HEK293 (cell line): ENCODE measurements at regions of chr11 and their contacts with region 1.

Region 1: DNA sequence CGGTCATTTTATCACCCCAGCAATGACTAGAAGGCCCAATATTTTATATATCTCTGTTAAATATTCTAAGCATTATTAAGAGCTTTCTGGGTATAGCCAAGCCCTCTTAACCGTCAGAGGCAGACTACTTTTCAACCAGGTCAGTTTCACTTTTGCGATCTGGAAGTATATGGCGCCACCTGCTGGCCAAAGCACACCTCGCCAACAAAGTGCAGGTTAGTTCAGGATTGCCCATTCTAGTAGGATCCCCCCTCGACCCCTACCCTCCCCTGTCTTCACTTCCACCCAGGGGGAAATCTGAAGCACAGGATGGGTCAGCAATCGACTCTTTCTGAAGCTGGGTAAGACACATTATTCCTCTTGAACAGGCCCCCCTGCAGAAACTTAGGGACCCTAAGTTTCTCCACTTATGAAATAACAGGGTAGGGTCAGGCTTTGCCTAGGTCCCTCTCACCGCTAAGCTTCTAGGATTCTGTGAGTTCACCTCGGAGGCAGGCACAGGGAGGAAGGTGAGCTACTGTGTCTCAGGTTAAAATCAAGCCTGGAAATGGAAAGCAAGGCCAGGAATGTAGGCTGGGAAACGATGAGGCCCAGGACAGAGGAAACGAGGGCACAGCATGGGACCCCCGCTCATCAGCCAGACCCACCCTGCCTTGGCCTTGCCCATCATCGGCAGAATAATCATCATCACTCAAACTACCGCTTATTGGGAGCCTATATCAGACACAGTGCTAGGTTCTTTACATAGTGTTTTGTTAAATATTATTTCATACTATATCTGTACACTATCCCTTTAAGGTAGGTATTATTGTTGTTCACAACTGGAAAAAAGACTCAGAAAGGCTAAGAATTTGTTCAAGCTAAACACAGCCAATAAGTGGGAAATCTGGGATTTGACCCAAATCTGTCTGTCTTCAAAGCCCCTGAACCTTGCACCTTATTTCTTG is 35.6 kb downstream of the KCNJ1 start:
- H3K4me3 ChIP-seq: no peak overlapping the region
- H3K27ac ChIP-seq: no peak overlapping the region
- H3K4me1 ChIP-seq: no peaks in the 10 kb centered on the region
- CTCF ChIP-seq: no peak

Region 2: DNA sequence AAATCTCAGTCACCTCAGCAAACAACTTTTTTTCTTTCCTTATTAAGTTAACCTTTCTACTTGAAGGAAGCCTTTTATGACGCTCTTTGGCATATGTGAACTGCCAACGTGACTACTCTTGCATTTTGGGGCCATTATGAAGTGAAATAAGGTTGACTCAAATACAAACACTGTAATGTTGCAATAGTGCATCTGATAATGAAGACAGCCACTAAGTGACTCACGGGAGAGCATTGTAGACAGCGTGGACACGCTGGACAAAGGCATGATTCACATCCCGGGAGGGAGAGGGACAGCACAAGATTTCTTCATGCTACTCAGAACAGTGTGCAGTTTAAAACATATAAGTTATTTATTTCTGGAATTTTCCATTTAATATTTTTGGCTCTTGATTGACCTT is 804.9 kb before region 1 on chr11:
- CTCF ChIA-PET with region 1: interaction called, 13 read pairs
- POLR2A ChIA-PET with region 1: no interaction called
- H3K4me3 ChIP-seq: no peak overlapping the region
- H3K27ac ChIP-seq: no peak overlapping the region
- H3K4me1 ChIP-seq: no peaks in the 10 kb centered on the region
- CTCF ChIP-seq: no peak

Region 3: GRCh38 chr11:128172046-128172878 is 659.2 kb before region 1 on chr11:
- CTCF ChIA-PET with region 1: interaction called, 62 read pairs
- POLR2A ChIA-PET with region 1: no interaction called
- H3K4me3 ChIP-seq: no peak overlapping the region
- H3K27ac ChIP-seq: no peak overlapping the region
- H3K4me1 ChIP-seq: peaks cover 3% of the 10 kb centered on the region; the same call in 1 of the 2 replicates
- CTCF ChIP-seq: 0 out of 2 replicates have a peak, but pooled peaks have one; percentile 17

Region 4: GRCh38 chr11:128841461-128842072 is 10.1 kb after region 1 on chr11:
- CTCF ChIA-PET with region 1: interaction called, 13 read pairs
- POLR2A ChIA-PET with region 1: no interaction called
- H3K4me3 ChIP-seq: no peak overlapping the region
- H3K27ac ChIP-seq: no peak overlapping the region
- H3K4me1 ChIP-seq: no peaks in the 10 kb centered on the region
- CTCF ChIP-seq: no peak

Region 5: GRCh38 chr11:128848815-128849455 is 17.5 kb after region 1 on chr11:
- CTCF ChIA-PET with region 1: interaction called, 13 read pairs
- POLR2A ChIA-PET with region 1: no interaction called
- H3K4me3 ChIP-seq: no peak overlapping the region
- H3K27ac ChIP-seq: no peak overlapping the region
- H3K4me1 ChIP-seq: no peaks in the 10 kb centered on the region
- CTCF ChIP-seq: no peak